H1 (cell line): ENCODE measurements at regions of chr6 and their contacts with region 1.

Region 1: GRCh38 chr6:26003102-26003694 is 40.6 kb downstream of the TRIM38 start:
- DNase-seq: peak in 1 of 2 experiments; percentile 89
- H3K4me3 ChIP-seq: no peak overlapping the region
- H3K27ac ChIP-seq: no peak overlapping the region
- H3K4me1 ChIP-seq: peaks cover 0 to 16% (median 4%) of the 10 kb centered on the region in 4 experiments; a peak in 4 of 7 replicates
- H3K27me3 ChIP-seq: no peaks in the 10 kb centered on the region
- CTCF ChIP-seq: peak; percentile 56 to 80 (median 75)
- EP300 ChIP-seq: no peak
- POLR2A ChIP-seq: no peak
- RAD21 ChIP-seq: peak; percentile 77 to 83

Region 2: GRCh38 chr6:25913741-25914140 is 89.5 kb before region 1 on chr6:
- CTCF ChIA-PET with region 1: interaction called, 10 read pairs
- POLR2A ChIA-PET with region 1: no interaction called
- DNase-seq: no peak
- H3K4me3 ChIP-seq: no peak overlapping the region
- H3K27ac ChIP-seq: no peak overlapping the region
- H3K4me1 ChIP-seq: no peaks in the 10 kb centered on the region
- H3K27me3 ChIP-seq: no peaks in the 10 kb centered on the region
- CTCF ChIP-seq: no peak
- EP300 ChIP-seq: no peak
- POLR2A ChIP-seq: no peak
- RAD21 ChIP-seq: no peak

Region 3: DNA sequence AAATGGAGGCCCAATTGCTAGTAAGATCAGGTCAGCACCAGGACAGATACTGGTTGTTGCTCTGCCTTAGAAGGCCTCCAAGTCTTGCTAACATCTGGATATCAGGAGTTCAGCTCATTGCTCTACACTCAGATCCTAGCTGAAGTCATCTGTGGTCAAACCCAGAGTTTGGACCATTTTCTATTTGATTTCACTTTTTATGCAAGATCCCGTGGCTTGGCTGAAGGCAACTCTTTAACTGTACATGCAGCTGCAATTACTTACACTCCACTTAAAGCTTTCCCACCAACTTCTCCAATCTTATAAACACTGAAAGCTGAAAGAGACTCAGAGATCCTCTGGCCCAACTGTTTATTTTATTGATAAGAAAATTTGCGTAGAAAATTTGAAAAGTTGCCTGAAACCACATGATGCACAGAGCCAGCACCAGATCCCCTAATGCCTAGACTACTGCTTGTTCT is 75.4 kb before region 1 on chr6:
- CTCF ChIA-PET with region 1: interaction called, 10 read pairs
- POLR2A ChIA-PET with region 1: no interaction called
- DNase-seq: no peak
- H3K4me3 ChIP-seq: no peak overlapping the region
- H3K27ac ChIP-seq: no peak overlapping the region
- H3K4me1 ChIP-seq: no peaks in the 10 kb centered on the region
- H3K27me3 ChIP-seq: no peaks in the 10 kb centered on the region
- CTCF ChIP-seq: no peak
- EP300 ChIP-seq: no peak
- POLR2A ChIP-seq: no peak
- RAD21 ChIP-seq: no peak

Region 4: DNA sequence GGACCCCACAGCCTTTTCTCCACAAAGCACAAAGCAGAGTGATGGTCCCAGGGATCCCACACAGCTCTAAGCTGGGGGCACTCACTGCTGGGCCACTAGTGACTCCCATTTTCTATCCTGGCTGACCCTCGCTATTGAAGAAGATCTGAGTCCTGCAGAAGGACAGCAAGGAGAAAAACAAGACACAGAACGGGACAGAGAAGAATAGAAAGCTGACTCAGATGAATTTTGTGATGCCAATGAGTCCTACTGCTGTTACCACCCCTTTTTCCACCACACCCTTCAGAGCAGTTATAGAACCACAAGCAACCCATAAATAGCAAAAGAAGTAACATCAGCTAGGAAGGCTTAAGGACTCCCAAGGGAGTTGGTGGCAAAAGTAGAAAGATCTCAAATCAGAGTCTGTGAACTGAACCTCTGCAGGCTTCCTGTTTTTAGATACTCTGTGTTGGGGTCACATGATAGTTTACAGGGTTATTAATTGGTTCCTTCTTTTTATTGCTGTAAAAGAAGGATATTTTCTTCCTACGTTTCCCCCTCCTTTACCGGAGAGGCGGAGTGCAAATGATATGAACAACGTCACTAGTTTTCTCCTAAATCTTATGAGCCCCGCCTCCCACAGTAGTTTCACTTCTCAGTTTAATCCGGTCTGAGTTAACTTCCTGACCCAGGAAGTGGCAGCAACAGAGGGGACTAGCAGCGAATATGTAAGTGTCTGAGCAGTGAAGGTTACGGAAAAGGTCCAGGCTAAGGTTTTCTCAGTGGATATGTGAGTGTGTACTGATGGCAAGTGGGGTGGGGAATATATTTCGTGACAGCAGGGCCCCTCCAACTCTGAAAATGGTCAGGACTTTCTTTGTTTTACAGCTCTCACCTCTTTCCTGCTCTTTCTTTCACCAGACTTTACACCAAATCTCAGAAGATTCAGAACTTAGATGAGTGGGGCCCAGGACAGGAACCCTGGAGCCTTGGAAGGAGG is 40.8 kb before region 1 on chr6 and contains the start of gene TRIM38:
- CTCF ChIA-PET with region 1: interaction called, 12 read pairs
- POLR2A ChIA-PET with region 1: no interaction called
- DNase-seq: no peak
- H3K4me3 ChIP-seq: peak within 1 kb of the TSS; percentile 38 to 51 (median 42); a peak in 7 of 8 replicates
- H3K27ac ChIP-seq: no peak within 1 kb of the TSS
- H3K4me1 ChIP-seq: peaks cover 9 to 24% (median 21%) of the 10 kb centered on the region in 4 experiments
- H3K27me3 ChIP-seq: peaks cover 0 to 2% (median 0%) of the 10 kb centered on the region in 4 experiments; a peak in 4 of 7 replicates
- CTCF ChIP-seq: no peak
- EP300 ChIP-seq: no peak
- POLR2A ChIP-seq: no peak
- RAD21 ChIP-seq: no peak
- total RNA-seq, gene TRIM38: 0.27 and 0.43 TPM in 2 replicates

Region 5: DNA sequence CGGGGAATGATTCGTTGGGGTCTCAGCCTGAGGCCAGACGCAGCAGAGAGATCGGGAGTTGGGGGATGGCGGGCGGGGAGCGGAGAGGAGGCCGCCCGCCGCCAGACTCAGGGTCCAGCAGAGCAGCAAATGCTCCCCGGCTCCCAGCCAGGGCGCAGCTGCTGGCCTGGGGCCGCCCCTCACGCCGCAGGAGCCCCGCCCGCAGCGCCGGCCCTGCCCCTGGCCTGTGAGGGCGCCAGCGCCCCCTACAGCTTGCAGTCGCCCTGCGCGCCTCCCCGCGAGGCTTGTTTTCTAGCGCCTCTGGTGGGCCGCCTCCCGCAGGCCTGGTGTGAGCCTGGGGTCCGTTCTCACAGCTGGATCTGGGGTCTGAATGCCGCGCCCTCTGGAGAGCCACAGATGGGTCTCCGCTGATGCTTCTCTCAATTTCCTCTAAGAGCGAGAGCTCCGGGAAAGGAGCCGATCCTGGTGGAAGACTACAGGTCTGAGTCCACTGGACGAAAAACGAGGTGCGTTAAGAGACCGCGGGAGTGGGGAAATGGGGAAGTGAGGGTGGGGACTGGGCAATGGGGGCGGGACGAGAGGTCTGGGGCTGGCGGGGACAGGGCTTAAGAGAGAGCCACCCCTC is 10.7 kb before region 1 on chr6:
- CTCF ChIA-PET with region 1: interaction called, 16 read pairs
- POLR2A ChIA-PET with region 1: interaction called, 4 read pairs
- DNase-seq: peak; percentile 82 to 99
- H3K4me3 ChIP-seq: peak overlapping the region; percentile 45 to 81 (median 68)
- H3K27ac ChIP-seq: no peak overlapping the region
- H3K4me1 ChIP-seq: peaks cover 0 to 8% (median 5%) of the 10 kb centered on the region in 4 experiments; a peak in 4 of 7 replicates
- H3K27me3 ChIP-seq: no peaks in the 10 kb centered on the region
- CTCF ChIP-seq: peak; percentile 91 to 99 (median 91)
- EP300 ChIP-seq: peak in 1 of 2 experiments; percentile 69; a peak in 1 of 3 replicates
- POLR2A ChIP-seq: peak; percentile 33 to 74
- RAD21 ChIP-seq: peak; percentile 57 to 77

Region 6: GRCh38 chr6:26020329-26021000 is 17.3 kb after region 1 on chr6:
- CTCF ChIA-PET with region 1: interaction called, 67 read pairs
- POLR2A ChIA-PET with region 1: interaction called, 87 read pairs
- DNase-seq: no peak
- H3K4me3 ChIP-seq: peak overlapping the region; percentile 69 to 94 (median 74)
- H3K27ac ChIP-seq: peak overlapping the region; percentile 95
- H3K4me1 ChIP-seq: peaks cover 2 to 14% (median 5%) of the 10 kb centered on the region in 4 experiments; a peak in 4 of 7 replicates
- H3K27me3 ChIP-seq: no peaks in the 10 kb centered on the region
- CTCF ChIP-seq: no peak
- EP300 ChIP-seq: no peak
- POLR2A ChIP-seq: peak; percentile 100
- RAD21 ChIP-seq: no peak; a peak in 1 of 4 replicates